GM12878 (cell line): ENCODE measurements at regions of chr6 and their contacts with region 1.

Region 1: GRCh38 chr6:130697995-130698535 is 129.1 kb upstream of the SMLR1 start:
- DNase-seq: peak; percentile 28
- ATAC-seq: peak; percentile 99
- H3K4me3 ChIP-seq: no peak overlapping the region
- H3K27ac ChIP-seq: no peak overlapping the region
- H3K4me1 ChIP-seq: no peaks in the 10 kb centered on the region
- H3K27me3 ChIP-seq: no peaks in the 10 kb centered on the region
- CTCF ChIP-seq: peak; percentile 71 to 81 (median 80)
- EP300 ChIP-seq: no peak
- POLR2A ChIP-seq: no peak
- RAD21 ChIP-seq: peak; percentile 95

Region 2: DNA sequence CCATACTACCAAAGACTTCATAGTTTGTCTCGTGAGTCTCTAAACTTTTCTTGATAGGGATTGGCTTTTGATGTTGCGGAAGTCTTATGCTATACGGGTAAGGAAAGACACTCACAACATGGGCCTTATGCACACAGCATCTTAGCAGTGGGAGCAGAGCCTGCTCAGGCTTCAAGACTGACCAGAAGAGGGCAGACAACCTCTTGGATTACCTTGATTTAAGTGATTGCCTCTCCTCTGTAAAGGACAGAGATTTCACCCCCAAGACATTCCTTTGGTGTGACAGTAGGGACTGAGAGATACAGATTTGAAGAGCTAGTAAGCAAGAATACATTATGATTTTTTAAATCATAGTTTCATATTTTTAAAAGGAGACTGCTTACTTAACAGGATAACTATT is 404.3 kb before region 1 on chr6:
- CTCF ChIA-PET with region 1: interaction called, 17 read pairs
- POLR2A ChIA-PET with region 1: no interaction called
- RAD21 ChIA-PET with region 1: interaction called, 10 read pairs
- SMC1A ChIA-PET with region 1: interaction called, 11 read pairs
- in situ Hi-C with region 1: no loop called
- intact Hi-C with region 1: no loop called
- DNase-seq: peak; percentile 8
- ATAC-seq: peak; percentile 98
- H3K4me3 ChIP-seq: no peak overlapping the region
- H3K27ac ChIP-seq: no peak overlapping the region
- H3K4me1 ChIP-seq: no peaks in the 10 kb centered on the region
- H3K27me3 ChIP-seq: no peaks in the 10 kb centered on the region
- CTCF ChIP-seq: peak; percentile 47 to 65 (median 64)
- EP300 ChIP-seq: no peak
- POLR2A ChIP-seq: no peak
- RAD21 ChIP-seq: peak; percentile 61

Region 3: DNA sequence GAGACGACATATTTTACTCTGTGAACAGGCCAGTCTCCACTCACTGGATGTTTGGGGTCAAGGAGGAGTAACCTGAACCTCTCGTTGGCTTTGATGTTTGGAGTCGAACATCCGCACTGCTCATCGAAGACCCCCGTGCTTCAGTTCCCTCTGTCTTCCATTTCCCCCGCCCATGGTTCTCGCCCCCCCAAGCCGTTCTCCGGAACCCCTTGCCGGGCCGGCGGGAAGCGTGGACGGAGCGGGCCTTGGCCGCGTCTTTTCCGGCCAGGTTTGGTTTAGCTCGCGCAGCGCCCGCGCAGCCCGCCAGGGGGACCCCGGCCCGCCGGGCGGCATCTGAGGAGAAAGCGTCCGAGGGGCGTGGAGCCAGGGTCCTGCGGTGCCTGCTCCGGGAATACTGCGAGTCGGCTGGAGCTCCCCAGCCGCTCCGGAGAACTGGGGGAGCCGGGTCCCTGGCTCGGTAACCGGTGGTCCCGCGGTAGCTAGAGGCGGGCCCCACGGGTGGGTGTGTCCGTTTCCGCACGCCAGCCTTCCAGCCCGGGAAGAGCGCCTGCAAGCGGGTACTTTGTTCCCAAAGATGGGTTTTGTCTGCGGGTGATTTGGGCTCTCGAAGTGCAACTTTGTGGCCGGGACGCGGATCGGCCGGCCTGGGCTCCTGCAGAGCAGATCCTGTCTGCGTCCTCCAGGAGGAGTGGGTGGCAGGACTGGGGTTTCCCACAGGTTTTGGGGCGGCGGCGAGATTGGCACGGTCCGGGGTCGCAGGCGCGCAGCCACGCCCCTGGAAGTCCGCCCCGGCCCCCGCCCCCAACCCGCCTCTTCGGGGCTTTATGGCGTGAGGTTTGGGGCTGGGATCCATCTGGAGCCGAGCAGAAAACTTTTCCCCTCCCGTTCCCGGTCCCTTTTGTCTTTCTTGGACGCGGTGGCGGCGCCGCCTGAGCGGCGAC is 332.6 kb before region 1 on chr6 and contains the start of gene TMEM200A:
- CTCF ChIA-PET with region 1: interaction called, 26 read pairs
- POLR2A ChIA-PET with region 1: interaction called, 3 read pairs
- RAD21 ChIA-PET with region 1: interaction called, 57 read pairs
- SMC1A ChIA-PET with region 1: interaction called, 16 read pairs
- in situ Hi-C with region 1: no loop called
- intact Hi-C with region 1: loop called (anchors 1 kb)
- DNase-seq: no peak
- ATAC-seq: peak; percentile 80
- H3K4me3 ChIP-seq: peak within 1 kb of the TSS; percentile 50; the same call in 1 of the 2 replicates
- H3K27ac ChIP-seq: no peak within 1 kb of the TSS
- H3K4me1 ChIP-seq: no peaks in the 10 kb centered on the region
- H3K27me3 ChIP-seq: peaks cover 0 to 7% of the 10 kb centered on the region in 2 experiments; a peak in 1 of 4 replicates
- CTCF ChIP-seq: peak; percentile 48 to 69 (median 67); a peak in 5 of 6 replicates
- EP300 ChIP-seq: no peak
- POLR2A ChIP-seq: no peak
- RAD21 ChIP-seq: peak; percentile 56
- polyA plus RNA-seq, gene TMEM200A: 6.0 to 10.0 TPM

Region 4: GRCh38 chr6:130513770-130514169 is 184.3 kb before region 1 on chr6:
- CTCF ChIA-PET with region 1: interaction called, 8 read pairs
- POLR2A ChIA-PET with region 1: no interaction called
- RAD21 ChIA-PET with region 1: interaction called, 6 read pairs
- SMC1A ChIA-PET with region 1: interaction called, 5 read pairs
- in situ Hi-C with region 1: no loop called
- intact Hi-C with region 1: loop called (anchors 5 kb)
- DNase-seq: peak; percentile 45
- ATAC-seq: peak; percentile 69
- H3K4me3 ChIP-seq: no peak overlapping the region
- H3K27ac ChIP-seq: no peak overlapping the region
- H3K4me1 ChIP-seq: peaks cover 6% of the 10 kb centered on the region
- H3K27me3 ChIP-seq: no peaks in the 10 kb centered on the region
- CTCF ChIP-seq: no peak
- EP300 ChIP-seq: peak; percentile 76 to 78; a peak in 3 of 4 replicates
- POLR2A ChIP-seq: no peak
- RAD21 ChIP-seq: no peak

Region 5: GRCh38 chr6:130620338-130620781 is 77.7 kb before region 1 on chr6:
- CTCF ChIA-PET with region 1: interaction called, 8 read pairs
- POLR2A ChIA-PET with region 1: no interaction called
- RAD21 ChIA-PET with region 1: interaction called, 4 read pairs
- SMC1A ChIA-PET with region 1: interaction called, 10 read pairs
- in situ Hi-C with region 1: no loop called
- intact Hi-C with region 1: loop called (anchors 5 kb)
- DNase-seq: no peak
- ATAC-seq: peak; percentile 47
- H3K4me3 ChIP-seq: no peak overlapping the region
- H3K27ac ChIP-seq: no peak overlapping the region
- H3K4me1 ChIP-seq: peaks cover 3% of the 10 kb centered on the region; the same call in 1 of the 2 replicates
- H3K27me3 ChIP-seq: no peaks in the 10 kb centered on the region
- CTCF ChIP-seq: no peak
- EP300 ChIP-seq: no peak
- POLR2A ChIP-seq: no peak
- RAD21 ChIP-seq: no peak

Region 6: GRCh38 chr6:130708338-130708737 is 10.3 kb after region 1 on chr6:
- CTCF ChIA-PET with region 1: interaction called, 9 read pairs
- POLR2A ChIA-PET with region 1: no interaction called
- RAD21 ChIA-PET with region 1: interaction called, 12 read pairs
- SMC1A ChIA-PET with region 1: interaction called, 13 read pairs
- in situ Hi-C with region 1: no loop called
- intact Hi-C with region 1: no loop called
- DNase-seq: no peak
- ATAC-seq: no peak
- H3K4me3 ChIP-seq: no peak overlapping the region
- H3K27ac ChIP-seq: no peak overlapping the region
- H3K4me1 ChIP-seq: no peaks in the 10 kb centered on the region
- H3K27me3 ChIP-seq: no peaks in the 10 kb centered on the region
- CTCF ChIP-seq: no peak
- EP300 ChIP-seq: no peak
- POLR2A ChIP-seq: no peak
- RAD21 ChIP-seq: no peak

Region 7: DNA sequence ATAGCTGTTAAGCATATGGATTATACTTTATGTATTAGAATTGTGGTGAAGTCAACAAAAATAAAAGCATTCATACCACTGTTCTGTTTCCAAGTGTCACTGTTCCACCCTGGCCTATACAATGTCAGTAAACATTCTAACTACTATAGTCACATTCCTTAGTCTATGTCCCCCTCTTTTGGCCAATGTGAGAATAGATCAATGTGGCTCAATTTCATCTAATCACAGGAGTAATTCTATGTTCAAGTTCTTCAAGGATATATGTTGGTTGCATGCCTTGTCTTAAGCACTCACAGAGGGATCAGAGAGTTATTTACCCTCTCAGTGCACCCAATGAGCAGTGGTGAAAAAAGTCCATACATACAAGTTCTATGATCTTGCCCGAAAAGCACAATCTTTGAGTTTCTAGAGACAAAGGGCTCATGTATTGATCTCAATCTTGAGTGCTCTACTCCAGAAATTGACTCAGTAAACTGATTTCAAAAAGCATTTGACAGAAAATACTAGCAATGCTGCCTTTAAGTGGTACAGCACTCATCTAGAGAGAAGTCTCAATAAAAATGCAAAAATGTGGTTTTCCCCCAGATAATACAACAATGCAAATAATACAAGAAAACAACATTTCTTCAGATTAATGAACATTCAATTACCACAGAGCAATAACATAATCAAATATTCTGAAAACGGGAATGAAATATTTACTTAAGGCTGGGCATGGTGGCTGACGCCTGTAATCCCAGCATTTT is 145.7 kb after region 1 on chr6:
- CTCF ChIA-PET with region 1: interaction called, 10 read pairs
- POLR2A ChIA-PET with region 1: no interaction called
- RAD21 ChIA-PET with region 1: interaction called, 12 read pairs
- SMC1A ChIA-PET with region 1: interaction called, 22 read pairs
- in situ Hi-C with region 1: no loop called
- intact Hi-C with region 1: loop called (anchors 2 kb)
- DNase-seq: peak; percentile 9
- ATAC-seq: peak; percentile 86
- H3K4me3 ChIP-seq: no peak overlapping the region
- H3K27ac ChIP-seq: no peak overlapping the region
- H3K4me1 ChIP-seq: no peaks in the 10 kb centered on the region
- H3K27me3 ChIP-seq: no peaks in the 10 kb centered on the region
- CTCF ChIP-seq: peak; percentile 49 to 75 (median 62); a peak in 5 of 6 replicates
- EP300 ChIP-seq: no peak
- POLR2A ChIP-seq: no peak
- RAD21 ChIP-seq: peak; percentile 84